ENCODE measurements at regions of chr3 and their contacts with region 1.

Region 1: DNA sequence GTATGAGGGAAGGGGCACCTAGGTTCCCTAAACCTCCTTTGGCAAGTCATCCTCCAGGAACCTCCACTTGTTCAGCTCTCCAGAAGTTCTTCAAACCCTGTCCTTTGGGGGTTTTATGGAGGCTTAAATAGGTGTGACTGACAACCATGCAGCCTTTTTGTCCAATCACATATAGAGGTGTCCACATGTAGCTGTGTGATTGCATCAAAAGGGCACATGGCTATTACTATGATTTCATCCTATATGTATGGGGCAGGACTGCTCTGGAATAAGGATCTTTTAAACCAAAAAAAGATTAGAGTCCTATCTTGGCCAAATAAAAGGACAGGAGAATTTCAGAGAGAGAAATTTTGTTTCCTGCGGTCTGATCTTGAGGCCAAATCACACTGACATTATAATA is 453.2 kb upstream of the EPHA6 start:
- DNase-seq: no peak
- ATAC-seq: no peak
- H3K4me3 ChIP-seq: no peak overlapping the region
- H3K4me3 Mint-ChIP-seq: no peak overlapping the region
- H3K27ac ChIP-seq: no peak overlapping the region
- H3K27ac Mint-ChIP-seq: no peak overlapping the region
- H3K4me1 ChIP-seq: no peaks in the 10 kb centered on the region
- H3K4me1 Mint-ChIP-seq: no peaks in the 10 kb centered on the region
- H3K27me3 ChIP-seq: no peaks in the 10 kb centered on the region
- H3K27me3 Mint-ChIP-seq: no peaks in the 10 kb centered on the region
- CTCF ChIP-seq: no peak

Region 2: GRCh38 chr3:95197616-95198015 is 1163.6 kb before region 1 on chr3:
- CTCF ChIA-PET with region 1: no interaction called
- POLR2A ChIA-PET with region 1: no interaction called
- intact Hi-C with region 1: loop called in 1 of 2 experiments (anchors 5 kb)
- DNase-seq: no peak
- ATAC-seq: no peak
- H3K4me3 ChIP-seq: no peak overlapping the region
- H3K4me3 Mint-ChIP-seq: no peak overlapping the region
- H3K27ac ChIP-seq: no peak overlapping the region
- H3K27ac Mint-ChIP-seq: no peak overlapping the region
- H3K4me1 ChIP-seq: no peaks in the 10 kb centered on the region
- H3K4me1 Mint-ChIP-seq: no peaks in the 10 kb centered on the region
- H3K27me3 ChIP-seq: no peaks in the 10 kb centered on the region
- H3K27me3 Mint-ChIP-seq: no peaks in the 10 kb centered on the region
- CTCF ChIP-seq: no peak

Region 3: GRCh38 chr3:96300743-96301142 is 60.5 kb before region 1 on chr3:
- CTCF ChIA-PET with region 1: no interaction called
- POLR2A ChIA-PET with region 1: no interaction called
- intact Hi-C with region 1: no loop called
- DNase-seq: no peak
- ATAC-seq: no peak
- H3K4me3 ChIP-seq: no peak overlapping the region
- H3K4me3 Mint-ChIP-seq: no peak overlapping the region
- H3K27ac ChIP-seq: no peak overlapping the region
- H3K27ac Mint-ChIP-seq: no peak overlapping the region
- H3K4me1 ChIP-seq: no peaks in the 10 kb centered on the region
- H3K4me1 Mint-ChIP-seq: no peaks in the 10 kb centered on the region
- H3K27me3 ChIP-seq: no peaks in the 10 kb centered on the region
- H3K27me3 Mint-ChIP-seq: no peaks in the 10 kb centered on the region
- CTCF ChIP-seq: no peak

Region 4: DNA sequence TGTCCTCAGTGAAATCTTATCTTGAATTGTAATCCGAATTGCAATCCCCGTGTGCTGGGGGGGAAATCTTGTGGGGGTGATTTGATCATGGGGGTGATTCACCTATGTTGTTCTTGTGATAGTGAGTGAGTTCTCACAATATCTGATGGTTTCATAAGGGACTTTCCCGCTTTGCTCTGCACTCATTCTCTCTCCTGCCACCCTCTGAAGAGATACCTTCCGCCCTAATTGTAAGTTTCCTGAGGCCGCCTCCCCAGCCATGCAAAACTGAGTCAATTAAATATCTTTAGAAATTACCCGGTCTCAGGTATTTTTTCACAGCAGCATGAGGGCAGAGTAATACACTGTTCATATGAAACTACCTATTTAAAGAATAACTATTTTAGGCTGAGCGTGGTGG is 149.1 kb after region 1 on chr3:
- CTCF ChIA-PET with region 1: no interaction called
- POLR2A ChIA-PET with region 1: no interaction called
- intact Hi-C with region 1: no loop called
- DNase-seq: no peak
- ATAC-seq: no peak
- H3K4me3 ChIP-seq: no peak overlapping the region
- H3K4me3 Mint-ChIP-seq: no peak overlapping the region
- H3K27ac ChIP-seq: no peak overlapping the region
- H3K27ac Mint-ChIP-seq: no peak overlapping the region
- H3K4me1 ChIP-seq: no peaks in the 10 kb centered on the region
- H3K4me1 Mint-ChIP-seq: no peaks in the 10 kb centered on the region
- H3K27me3 ChIP-seq: no peaks in the 10 kb centered on the region
- H3K27me3 Mint-ChIP-seq: no peaks in the 10 kb centered on the region
- CTCF ChIP-seq: no peak

Measured in CD4-positive, alpha-beta T cell (primary cell).